Breast epithelium (tissue), 4 donors: ENCODE measurements at regions of chr16 and their contacts with region 1.

Region 1: GRCh38 chr16:3950343-3951193 is 70.1 kb upstream of the CREBBP start:
- DNase-seq: peak; percentile 53 to 69
- H3K4me3 ChIP-seq: peak overlapping the region; percentile 9 to 59 (median 27)
- H3K27ac ChIP-seq: peak overlapping the region; percentile 66 to 90
- H3K4me1 ChIP-seq: no peaks in the 10 kb centered on the region
- H3K27me3 ChIP-seq: no peaks in the 10 kb centered on the region
- CTCF ChIP-seq: no peak
- POLR2A ChIP-seq: no peak

Region 2: GRCh38 chr16:3915426-3916215 is 34.9 kb before region 1 on chr16:
- intact Hi-C with region 1: loop called (anchors 1 kb)
- DNase-seq: no peak
- H3K4me3 ChIP-seq: no peak overlapping the region
- H3K27ac ChIP-seq: no peak overlapping the region
- H3K4me1 ChIP-seq: no peaks in the 10 kb centered on the region
- H3K27me3 ChIP-seq: no peaks in the 10 kb centered on the region
- CTCF ChIP-seq: no peak
- POLR2A ChIP-seq: no peak